Psoas muscle (tissue), 8 donors: ENCODE measurements at regions of chr1 and their contacts with region 1.

Region 1: DNA sequence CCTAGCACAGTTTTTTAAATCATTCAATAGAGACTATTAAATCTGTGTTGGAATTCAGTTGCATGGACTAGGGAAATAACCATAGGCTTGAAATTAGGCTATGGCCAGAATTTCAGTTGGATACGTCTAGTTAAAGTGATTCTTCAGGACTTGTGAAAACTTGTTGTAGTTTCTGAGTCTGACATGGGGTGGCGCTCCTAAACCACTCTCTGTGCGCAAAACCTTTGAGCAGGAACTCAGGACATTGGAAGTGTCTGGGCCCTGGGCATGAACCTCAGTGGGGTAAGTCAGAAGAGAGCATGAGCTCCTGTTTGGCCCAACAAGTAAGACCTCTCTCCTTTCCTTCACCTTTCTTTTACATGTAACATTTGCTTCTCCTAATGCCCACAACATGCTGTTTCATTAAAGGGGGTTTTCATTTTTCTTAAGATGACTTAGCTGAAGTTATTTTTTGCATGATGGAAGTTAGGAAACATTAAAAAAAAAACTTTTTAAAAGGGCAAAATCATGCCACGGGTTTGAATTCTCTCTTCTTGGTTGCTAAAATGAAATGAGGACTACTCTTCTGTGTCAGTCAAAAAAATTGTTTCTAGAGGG is 17.1 kb upstream of the CCDC190 start:
- DNase-seq: peak; percentile 33 to 61
- ATAC-seq: peak; percentile 79 to 88 (median 84)
- H3K4me3 ChIP-seq: no peak overlapping the region
- H3K27ac ChIP-seq: no peak overlapping the region
- H3K4me1 ChIP-seq: peaks cover 12% of the 10 kb centered on the region
- H3K27me3 ChIP-seq: no peaks in the 10 kb centered on the region
- CTCF ChIP-seq: peak; percentile 84

Region 2: GRCh38 chr1:163071405-163072255 is 193.5 kb after region 1 on chr1:
- intact Hi-C with region 1: loop called (anchors 1 to 5 kb)
- DNase-seq: peak; percentile 37 to 54
- ATAC-seq: peak; percentile 40 to 70 (median 60)
- H3K4me3 ChIP-seq: no peak overlapping the region
- H3K27ac ChIP-seq: no peak overlapping the region
- H3K4me1 ChIP-seq: peaks cover 11% of the 10 kb centered on the region
- H3K27me3 ChIP-seq: no peaks in the 10 kb centered on the region
- CTCF ChIP-seq: peak; percentile 59